Sigmoid colon (tissue), 7 donors: ENCODE measurements at regions of chr20 and their contacts with region 1.

Region 1: DNA sequence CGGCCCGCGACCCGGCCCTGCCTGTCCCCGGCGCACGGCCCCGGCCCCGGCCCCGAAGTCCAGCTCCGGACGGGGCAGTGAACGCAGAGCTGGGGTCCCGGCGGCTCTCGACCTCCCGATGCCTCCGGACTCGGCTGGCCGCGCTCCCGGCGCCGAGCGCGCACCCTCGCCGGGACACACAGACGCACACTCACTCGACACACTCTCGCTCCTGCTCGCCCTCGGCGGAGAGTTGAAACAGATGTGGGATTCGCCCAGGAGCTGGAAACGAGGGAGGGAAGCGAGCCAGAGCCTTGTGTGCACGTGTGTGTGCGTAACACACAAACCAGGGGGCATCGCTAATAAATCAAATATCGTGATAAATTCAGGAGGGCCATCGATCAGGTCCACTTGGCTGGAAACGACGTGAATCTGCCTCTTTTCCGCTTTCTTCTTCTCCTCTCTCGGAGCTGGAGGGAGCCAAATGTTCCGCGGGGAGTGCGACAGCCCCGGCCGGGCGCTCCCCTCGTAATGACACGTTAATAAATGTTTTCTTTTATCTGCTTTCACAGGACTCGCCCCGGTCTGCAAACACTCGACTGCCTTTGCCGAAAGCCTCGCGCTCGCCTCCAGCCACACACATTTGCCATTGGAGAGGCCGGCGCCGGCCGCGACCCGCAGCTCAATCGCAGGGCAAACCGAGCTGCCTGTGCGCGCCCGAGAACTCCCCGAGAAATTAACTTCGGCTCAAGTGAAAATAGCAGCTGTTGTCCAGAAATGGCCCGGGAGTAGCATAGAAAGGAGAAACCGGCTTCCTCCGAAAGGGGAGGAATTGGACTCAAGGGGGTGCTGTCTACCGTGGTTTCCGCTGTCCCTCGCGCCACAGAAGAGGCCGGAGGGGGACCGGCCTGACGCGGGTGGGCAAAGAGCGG is 828 bp upstream of the SULF2 start:
- DNase-seq: peak; percentile 87
- H3K4me3 ChIP-seq: peak overlapping the region; percentile 26 to 81 (median 72)
- H3K27ac ChIP-seq: peak overlapping the region; percentile 82 to 93 (median 86)
- H3K4me1 ChIP-seq: peaks cover 0 to 72% (median 53%) of the 10 kb centered on the region in 4 donors
- H3K27me3 ChIP-seq: no peaks in the 10 kb centered on the region
- CTCF ChIP-seq: peak; percentile 52 to 75 (median 66)
- EP300 ChIP-seq: no peak
- POLR2A ChIP-seq: no peak

Region 2: DNA sequence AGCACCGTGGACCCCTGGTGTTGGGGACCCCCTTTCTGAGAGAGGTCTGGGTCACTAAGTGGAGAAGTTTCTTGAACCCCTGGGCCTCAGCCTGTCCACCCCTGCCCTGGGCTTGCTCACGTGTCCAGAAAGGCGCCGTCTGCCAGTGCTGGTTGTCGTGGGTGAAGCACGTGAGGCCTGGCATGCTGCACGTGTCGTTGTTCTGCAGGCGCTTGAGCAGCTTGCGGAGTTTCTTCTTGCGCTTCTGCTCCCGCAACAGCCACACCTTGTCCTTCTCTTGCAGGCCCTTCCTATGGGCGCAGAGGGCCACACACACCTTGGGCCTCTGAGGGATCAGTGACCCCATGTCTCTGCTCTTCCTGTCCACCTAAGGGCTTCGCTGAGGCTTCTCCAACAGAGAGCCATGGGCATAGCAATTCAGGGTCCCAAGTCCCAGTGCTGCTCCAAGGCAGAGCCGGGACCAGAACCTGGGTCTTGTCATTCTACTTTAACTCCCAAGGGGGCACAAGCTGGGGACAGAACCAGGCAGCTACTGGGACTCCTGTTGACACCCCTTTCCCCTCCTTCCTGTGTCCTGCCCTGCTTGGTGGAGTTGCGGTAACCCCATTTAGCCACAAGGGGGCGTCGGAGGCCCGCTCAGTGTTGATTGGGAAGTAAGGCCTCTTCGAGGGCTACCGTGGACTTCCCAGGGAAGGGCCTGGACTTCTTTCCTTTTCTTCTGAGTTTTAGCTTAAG is 122.6 kb before region 1 on chr20:
- intact Hi-C with region 1: loop called (anchors 5 kb)
- DNase-seq: peak; percentile 88
- H3K4me3 ChIP-seq: no peak overlapping the region
- H3K27ac ChIP-seq: no peak overlapping the region
- H3K4me1 ChIP-seq: peaks cover 0 to 9% (median 5%) of the 10 kb centered on the region in 4 donors
- H3K27me3 ChIP-seq: no peaks in the 10 kb centered on the region
- CTCF ChIP-seq: peak; percentile 82 to 98 (median 92)
- EP300 ChIP-seq: no peak
- POLR2A ChIP-seq: no peak

Region 3: DNA sequence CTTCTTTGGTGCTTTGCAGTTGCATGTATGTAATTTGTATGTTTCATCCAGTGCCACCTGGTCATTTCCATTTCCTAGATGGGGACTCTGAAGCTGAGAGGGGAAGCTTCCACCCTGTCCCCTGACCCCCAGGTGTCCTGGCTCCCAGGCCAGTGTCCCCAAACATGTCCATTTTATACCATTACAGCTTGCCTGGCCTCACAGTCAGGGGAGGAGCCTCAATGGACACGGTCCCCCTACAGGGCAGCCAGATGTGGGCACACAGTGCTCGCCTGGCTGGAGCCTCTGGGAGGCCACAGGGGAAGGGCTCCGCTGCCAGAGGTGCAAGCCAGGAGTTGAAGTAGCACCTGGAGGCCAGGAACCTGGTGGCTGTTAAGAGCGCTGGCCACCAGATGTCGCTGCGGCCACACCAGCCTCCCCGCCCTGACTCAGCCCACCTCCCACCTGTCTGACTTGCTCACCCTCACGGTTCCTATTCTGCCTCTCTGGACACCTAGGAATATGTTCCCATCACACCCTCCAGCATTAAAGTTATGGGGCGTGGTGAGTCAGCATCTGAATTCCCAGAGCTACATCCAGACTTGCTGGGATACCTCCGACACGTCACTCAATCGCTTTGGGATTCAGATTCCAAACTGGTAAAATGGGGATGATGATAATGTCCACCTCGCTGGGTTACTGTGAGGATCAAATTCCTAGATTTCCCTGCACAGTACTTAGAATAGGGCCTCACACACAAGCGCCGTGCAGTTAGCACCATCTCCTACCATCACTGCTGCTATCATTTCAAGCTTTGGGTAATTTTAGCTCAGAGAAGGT is 108.3 kb before region 1 on chr20:
- intact Hi-C with region 1: loop called (anchors 5 kb)
- DNase-seq: no peak
- H3K4me3 ChIP-seq: no peak overlapping the region
- H3K27ac ChIP-seq: no peak overlapping the region
- H3K4me1 ChIP-seq: peaks cover 0 to 18% (median 15%) of the 10 kb centered on the region in 4 donors
- H3K27me3 ChIP-seq: no peaks in the 10 kb centered on the region
- CTCF ChIP-seq: peak; percentile 37 to 80 (median 68)
- EP300 ChIP-seq: no peak
- POLR2A ChIP-seq: no peak

Region 4: DNA sequence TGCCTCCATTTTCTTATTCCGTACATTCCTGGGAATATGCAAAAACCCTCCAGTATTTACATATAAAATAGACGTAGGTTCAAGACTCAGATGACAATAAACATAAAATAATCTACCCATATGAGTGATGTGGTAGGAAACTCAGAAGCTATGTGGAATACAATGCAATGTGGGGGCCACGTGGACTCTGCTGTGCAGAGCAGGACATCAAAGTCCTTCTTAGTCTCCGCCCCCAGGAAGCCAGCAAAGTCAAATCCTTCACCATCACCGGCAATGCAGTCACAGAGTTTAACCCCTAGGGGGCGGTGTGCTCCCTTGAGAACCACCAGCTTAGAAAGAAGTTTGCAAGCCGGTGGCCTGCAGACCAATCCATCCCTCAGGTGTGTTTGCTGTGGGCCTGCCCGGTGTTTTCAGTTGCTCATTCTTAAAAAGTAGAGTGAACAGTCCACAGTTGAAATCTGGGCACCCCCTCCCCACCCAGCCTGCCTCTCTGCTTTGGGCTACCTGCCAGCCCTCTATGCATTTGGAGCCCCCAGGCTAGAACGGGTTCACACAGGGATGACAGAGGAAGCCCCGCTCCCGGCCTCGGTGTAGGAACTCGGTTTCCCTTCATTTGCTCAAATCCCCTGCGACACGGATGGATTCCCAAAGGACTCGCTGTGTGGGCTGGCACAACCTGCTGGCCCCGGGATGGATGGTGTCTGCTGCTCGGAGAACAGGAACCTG is 60.7 kb before region 1 on chr20:
- intact Hi-C with region 1: loop called (anchors 2 kb)
- DNase-seq: peak; percentile 80
- H3K4me3 ChIP-seq: no peak overlapping the region
- H3K27ac ChIP-seq: no peak overlapping the region
- H3K4me1 ChIP-seq: peaks cover 0 to 18% (median 14%) of the 10 kb centered on the region in 4 donors
- H3K27me3 ChIP-seq: no peaks in the 10 kb centered on the region
- CTCF ChIP-seq: peak; percentile 31 to 86 (median 81)
- EP300 ChIP-seq: no peak
- POLR2A ChIP-seq: no peak

Region 5: GRCh38 chr20:47857566-47858471 is 71.7 kb after region 1 on chr20:
- intact Hi-C with region 1: loop called (anchors 5 kb)
- DNase-seq: peak; percentile 85
- H3K4me3 ChIP-seq: peak overlapping the region in 1 of 4 donors; percentile 6
- H3K27ac ChIP-seq: peak overlapping the region; percentile 57 to 79 (median 69)
- H3K4me1 ChIP-seq: peaks cover 0 to 18% (median 16%) of the 10 kb centered on the region in 4 donors
- H3K27me3 ChIP-seq: no peaks in the 10 kb centered on the region
- CTCF ChIP-seq: no peak
- EP300 ChIP-seq: no peak
- POLR2A ChIP-seq: no peak

Region 6: DNA sequence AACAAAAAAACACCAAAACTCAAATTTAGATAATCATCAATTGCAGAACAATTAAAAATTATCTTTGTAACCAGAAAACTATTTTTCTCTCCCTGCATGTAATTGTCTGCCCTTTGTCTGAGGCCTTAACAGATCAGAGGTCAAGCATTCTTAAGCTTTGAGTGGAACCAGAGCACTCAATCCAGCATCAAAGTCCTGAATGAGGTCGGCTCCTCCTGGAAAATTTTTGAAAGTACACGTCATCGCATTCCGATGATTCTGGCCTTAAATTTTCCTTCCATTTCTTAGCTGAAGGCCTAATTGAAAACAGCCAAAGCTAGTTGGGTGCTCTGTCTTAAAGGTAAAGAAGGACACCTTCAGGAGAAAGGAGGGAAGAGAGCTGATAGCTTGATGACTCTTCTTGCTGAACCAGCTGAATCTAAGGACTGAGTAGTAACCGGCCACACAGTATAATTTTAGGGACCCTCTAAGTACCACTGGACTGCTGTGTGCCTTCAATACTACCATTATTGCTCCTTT is 509.4 kb after region 1 on chr20:
- intact Hi-C with region 1: loop called (anchors 5 kb)
- DNase-seq: no peak
- H3K4me3 ChIP-seq: no peak overlapping the region
- H3K27ac ChIP-seq: peak overlapping the region; percentile 60 to 82 (median 72)
- H3K4me1 ChIP-seq: peaks cover 0 to 58% (median 38%) of the 10 kb centered on the region in 4 donors
- H3K27me3 ChIP-seq: no peaks in the 10 kb centered on the region
- CTCF ChIP-seq: no peak
- EP300 ChIP-seq: no peak
- POLR2A ChIP-seq: no peak

Region 7: DNA sequence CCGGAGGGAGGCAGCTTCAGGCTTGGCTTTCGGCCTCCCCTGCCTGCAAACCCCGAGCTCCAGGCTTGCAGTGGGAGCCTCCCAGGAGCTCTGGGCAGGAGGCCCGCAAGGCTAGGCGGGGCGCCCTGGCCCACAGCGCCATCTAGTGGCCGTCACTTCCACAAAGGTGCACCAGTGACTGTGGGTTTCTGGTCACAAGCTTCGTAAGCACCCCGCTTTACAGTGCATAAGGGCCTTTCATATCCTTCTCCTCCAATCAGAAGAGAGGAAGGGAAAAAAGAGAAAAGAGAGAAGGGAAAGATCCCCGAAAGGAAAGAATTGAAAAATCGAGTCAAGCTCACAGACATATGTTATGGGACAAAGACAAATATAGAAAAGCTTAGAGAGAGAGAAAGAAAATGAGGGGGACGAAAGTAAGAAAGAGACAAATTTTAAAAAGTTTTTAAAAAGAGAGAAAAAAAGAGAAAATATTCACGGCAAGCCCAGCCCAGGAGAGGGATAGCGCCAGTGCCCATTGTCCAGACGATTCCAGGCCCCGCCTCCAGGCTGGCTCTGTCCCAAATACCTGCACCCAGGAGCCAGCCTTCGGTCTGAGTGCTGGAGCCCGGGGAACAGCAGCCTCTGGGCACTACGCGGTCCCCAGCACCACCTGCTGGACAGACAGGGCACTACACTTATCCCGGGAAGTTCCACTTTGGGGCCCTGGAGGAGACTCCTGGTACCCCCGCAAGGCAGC is 834.6 kb after region 1 on chr20:
- intact Hi-C with region 1: loop called (anchors 1 kb)
- DNase-seq: peak; percentile 93
- H3K4me3 ChIP-seq: peak overlapping the region in 3 of 4 donors; percentile 20 to 38 (median 37)
- H3K27ac ChIP-seq: peak overlapping the region; percentile 2 to 65 (median 30)
- H3K4me1 ChIP-seq: peaks cover 0 to 22% (median 21%) of the 10 kb centered on the region in 4 donors
- H3K27me3 ChIP-seq: no peaks in the 10 kb centered on the region
- CTCF ChIP-seq: peak; percentile 78 to 96 (median 89)
- EP300 ChIP-seq: no peak
- POLR2A ChIP-seq: no peak